HCT116 (cell line): ENCODE measurements at regions of chr19 and their contacts with region 1.

Region 1: DNA sequence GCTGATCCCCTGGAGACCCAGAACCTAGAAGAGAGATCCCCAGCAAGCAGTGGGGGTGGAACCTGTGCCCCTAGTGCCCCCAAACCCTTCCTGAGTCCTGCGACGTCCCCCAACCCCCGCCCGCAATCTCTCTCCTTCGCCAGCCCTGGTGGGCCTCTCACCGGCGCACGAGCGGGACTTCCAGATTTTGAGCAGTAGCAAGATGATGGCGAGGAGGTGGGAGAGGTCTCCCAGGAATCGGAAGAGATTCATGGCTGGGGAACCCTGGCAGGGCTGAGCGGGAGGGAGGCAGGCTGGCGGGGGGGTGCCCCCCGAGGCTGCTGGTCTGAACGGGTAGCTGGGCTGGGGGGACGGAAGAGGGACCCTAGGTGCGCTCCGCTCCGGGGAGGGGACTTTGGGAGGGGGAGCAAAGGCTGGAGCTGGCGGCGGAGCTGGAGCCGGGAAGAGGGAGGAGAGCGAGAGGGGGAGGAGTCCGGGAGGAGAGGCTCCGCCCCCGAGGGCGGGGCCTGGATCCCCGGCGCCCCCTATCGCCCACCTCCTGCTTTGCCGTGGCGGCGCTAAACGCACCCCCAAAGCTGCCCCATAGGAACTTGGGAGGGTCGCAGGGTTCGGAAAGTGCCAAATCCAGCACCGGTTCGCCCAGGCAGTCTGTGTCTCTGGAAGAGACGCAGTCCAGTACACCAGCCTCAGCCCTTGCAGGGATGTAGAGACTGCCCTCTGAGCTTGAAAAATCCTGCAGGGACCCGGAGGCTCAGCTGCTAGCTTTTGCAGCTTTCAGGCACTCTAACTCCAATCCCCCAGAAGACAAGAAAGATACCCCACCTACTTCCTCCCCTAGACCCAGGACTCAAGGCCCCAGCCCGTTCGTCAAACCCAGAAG is at the start of gene KDELR1:
- DNase-seq: no peak
- ATAC-seq: peak; percentile 80
- H3K4me3 ChIP-seq: peak within 1 kb of the TSS; percentile 82 to 96
- H3K27ac ChIP-seq: peak within 1 kb of the TSS; percentile 80
- H3K4me1 ChIP-seq: peaks cover 9 to 52% of the 10 kb centered on the region in 2 experiments
- H3K27me3 ChIP-seq: no peaks in the 10 kb centered on the region
- CTCF ChIP-seq: peak in 2 of 3 experiments; percentile 81 to 95; a peak in 5 of 6 replicates
- POLR2A ChIP-seq: no peak
- RAD21 ChIP-seq: no peak
- total RNA-seq, gene KDELR1: 212 TPM

Region 2: DNA sequence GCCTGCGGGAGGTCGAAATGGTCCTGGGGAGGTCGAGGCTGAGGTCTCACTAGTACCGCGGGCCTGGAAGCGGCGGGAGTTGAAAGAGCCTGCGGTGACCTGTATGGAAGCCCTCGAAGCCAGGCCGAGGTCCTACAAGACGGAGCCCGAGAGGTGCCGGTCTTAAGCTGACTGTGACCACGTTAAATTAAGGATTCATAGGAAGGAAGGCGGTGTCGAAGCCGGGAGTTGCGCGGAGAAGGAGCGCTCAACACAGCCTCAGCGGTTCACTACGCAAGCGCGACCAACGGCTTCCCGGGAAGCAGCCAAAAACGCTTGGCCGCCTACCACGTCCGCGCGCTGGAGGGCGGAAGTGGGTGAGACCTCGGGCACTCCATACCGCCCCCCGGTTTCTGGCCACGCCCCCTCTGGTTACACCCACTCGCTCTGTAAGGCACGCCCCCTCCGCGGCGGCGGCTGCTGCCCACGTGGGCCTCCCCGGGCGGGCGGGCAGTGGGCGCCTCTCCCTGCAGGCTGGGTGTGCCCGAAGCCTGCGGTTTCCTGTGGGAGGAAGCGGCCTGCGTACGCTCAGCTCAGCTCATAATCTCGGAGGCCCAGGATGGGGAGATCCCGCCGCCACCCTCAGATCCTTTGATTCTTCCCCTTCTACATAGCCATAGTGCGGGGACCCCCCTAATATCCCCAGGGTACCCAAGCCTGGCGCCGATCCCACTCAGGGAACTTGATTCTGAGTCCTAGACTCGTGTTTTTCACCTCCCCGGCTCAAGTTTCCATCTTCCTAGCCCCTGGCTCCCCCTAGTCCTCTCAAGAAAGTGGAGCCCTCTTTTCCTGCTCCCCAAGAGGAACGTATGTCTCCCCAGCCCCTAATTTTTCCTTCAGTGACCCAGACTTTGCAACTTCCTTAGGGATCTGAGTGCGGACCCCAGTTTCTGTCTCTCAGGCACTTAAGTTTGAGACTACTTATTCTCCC is 69.4 kb before region 1 on chr19:
- CTCF ChIA-PET with region 1: interaction called, 7 read pairs
- POLR2A ChIA-PET with region 1: no interaction called
- RAD21 ChIA-PET with region 1: no interaction called
- intact Hi-C with region 1: loop called (anchors 10 kb)
- DNase-seq: peak; percentile 94
- ATAC-seq: peak; percentile 69
- H3K4me3 ChIP-seq: peak overlapping the region; percentile 55 to 67
- H3K27ac ChIP-seq: peak overlapping the region; percentile 96
- H3K4me1 ChIP-seq: peaks cover 40 to 76% of the 10 kb centered on the region in 2 experiments
- H3K27me3 ChIP-seq: no peaks in the 10 kb centered on the region
- CTCF ChIP-seq: peak in 1 of 3 experiments; percentile 8; a peak in 1 of 6 replicates
- POLR2A ChIP-seq: peak; percentile 59
- RAD21 ChIP-seq: no peak

Region 3: DNA sequence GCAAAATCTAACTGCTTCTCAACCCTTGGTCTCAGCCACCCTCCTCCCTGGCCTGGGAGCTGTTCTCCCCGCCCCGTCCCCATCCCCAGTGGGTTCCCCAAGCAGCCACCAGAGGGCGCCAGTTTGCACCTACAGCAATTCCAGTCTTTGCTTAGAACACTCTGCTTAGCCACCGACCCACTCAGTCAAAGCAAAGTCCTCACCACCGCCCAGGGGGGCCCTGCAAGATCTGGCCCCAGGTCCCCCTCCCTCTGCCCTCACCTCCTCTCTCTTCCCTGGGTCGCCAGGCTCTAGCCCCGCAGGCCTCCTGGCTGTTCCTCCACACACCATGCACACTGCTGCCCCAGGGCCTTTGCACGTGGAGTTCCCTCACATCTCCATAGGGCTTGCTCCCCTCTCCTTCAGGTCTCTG is 40.0 kb before region 1 on chr19:
- CTCF ChIA-PET with region 1: interaction called, 10 read pairs
- POLR2A ChIA-PET with region 1: interaction called, 3 read pairs
- RAD21 ChIA-PET with region 1: interaction called in 1 of 2 experiments, 3 read pairs
- intact Hi-C with region 1: no loop called
- DNase-seq: no peak
- ATAC-seq: peak; percentile 67
- H3K4me3 ChIP-seq: no peak overlapping the region
- H3K27ac ChIP-seq: no peak overlapping the region
- H3K4me1 ChIP-seq: peaks cover 22 to 46% of the 10 kb centered on the region in 2 experiments
- H3K27me3 ChIP-seq: no peaks in the 10 kb centered on the region
- CTCF ChIP-seq: peak; percentile 75 to 96 (median 95); a peak in 5 of 6 replicates
- POLR2A ChIP-seq: no peak
- RAD21 ChIP-seq: peak; percentile 80